ENCODE measurements at regions of chr11 and their contacts with region 1.

Region 1: GRCh38 chr11:86021377-86021776 is 47.5 kb downstream of the PICALM start:
- DNase-seq: no peak
- ATAC-seq: no peak
- H3K4me3 ChIP-seq: no peak overlapping the region
- H3K27ac ChIP-seq: peak overlapping the region in 2 of 4 donors; percentile 17 to 22
- H3K4me1 ChIP-seq: peaks cover 0 to 3% of the 10 kb centered on the region in 2 donors
- H3K27me3 ChIP-seq: no peaks in the 10 kb centered on the region
- CTCF ChIP-seq: no peak
- POLR2A ChIP-seq: no peak

Region 2: GRCh38 chr11:85967457-85967856 is 53.9 kb before region 1 on chr11:
- in situ Hi-C with region 1: no loop called
- intact Hi-C with region 1: no loop called
- DNase-seq: no peak
- ATAC-seq: no peak
- H3K4me3 ChIP-seq: no peak overlapping the region
- H3K27ac ChIP-seq: no peak overlapping the region
- H3K4me1 ChIP-seq: peaks cover 26 to 35% of the 10 kb centered on the region in 2 donors
- H3K27me3 ChIP-seq: no peaks in the 10 kb centered on the region
- CTCF ChIP-seq: no peak
- POLR2A ChIP-seq: no peak

Region 3: DNA sequence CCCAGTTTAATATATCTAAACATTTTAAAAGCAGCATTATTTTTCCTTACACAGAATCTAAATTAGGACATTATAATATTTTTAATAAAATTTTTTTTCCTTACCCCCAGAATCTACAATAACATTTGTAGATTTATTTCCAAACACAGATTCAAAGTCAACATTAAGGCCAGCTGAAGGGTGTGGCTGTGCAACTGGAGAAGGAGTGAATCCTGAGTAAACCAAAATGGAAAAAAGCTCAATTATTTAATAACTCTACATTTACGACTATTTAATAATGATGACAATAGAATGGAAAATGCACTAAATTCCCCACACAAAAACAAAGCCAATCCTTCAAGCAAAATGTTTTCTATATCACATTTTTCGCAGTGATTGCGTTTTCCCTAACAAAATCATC is 37.6 kb before region 1 on chr11:
- in situ Hi-C with region 1: no loop called
- intact Hi-C with region 1: loop called (anchors 5 kb)
- DNase-seq: no peak
- ATAC-seq: no peak
- H3K4me3 ChIP-seq: no peak overlapping the region
- H3K27ac ChIP-seq: peak overlapping the region in 2 of 4 donors; percentile 12 to 33
- H3K4me1 ChIP-seq: peaks cover 8 to 15% of the 10 kb centered on the region in 2 donors
- H3K27me3 ChIP-seq: no peaks in the 10 kb centered on the region
- CTCF ChIP-seq: no peak
- POLR2A ChIP-seq: no peak

Measured in gastrocnemius medialis (tissue), 4 donors.